Dendritic cell treated with granulocyte-macrophage colony-stimulating factor and Interleukin-4, amounts not matched to agents 40 ng/mL and 50 ng/mL, for 4 days (primary cell): ENCODE measurements at regions of chr15 and their contacts with region 1.

Region 1: DNA sequence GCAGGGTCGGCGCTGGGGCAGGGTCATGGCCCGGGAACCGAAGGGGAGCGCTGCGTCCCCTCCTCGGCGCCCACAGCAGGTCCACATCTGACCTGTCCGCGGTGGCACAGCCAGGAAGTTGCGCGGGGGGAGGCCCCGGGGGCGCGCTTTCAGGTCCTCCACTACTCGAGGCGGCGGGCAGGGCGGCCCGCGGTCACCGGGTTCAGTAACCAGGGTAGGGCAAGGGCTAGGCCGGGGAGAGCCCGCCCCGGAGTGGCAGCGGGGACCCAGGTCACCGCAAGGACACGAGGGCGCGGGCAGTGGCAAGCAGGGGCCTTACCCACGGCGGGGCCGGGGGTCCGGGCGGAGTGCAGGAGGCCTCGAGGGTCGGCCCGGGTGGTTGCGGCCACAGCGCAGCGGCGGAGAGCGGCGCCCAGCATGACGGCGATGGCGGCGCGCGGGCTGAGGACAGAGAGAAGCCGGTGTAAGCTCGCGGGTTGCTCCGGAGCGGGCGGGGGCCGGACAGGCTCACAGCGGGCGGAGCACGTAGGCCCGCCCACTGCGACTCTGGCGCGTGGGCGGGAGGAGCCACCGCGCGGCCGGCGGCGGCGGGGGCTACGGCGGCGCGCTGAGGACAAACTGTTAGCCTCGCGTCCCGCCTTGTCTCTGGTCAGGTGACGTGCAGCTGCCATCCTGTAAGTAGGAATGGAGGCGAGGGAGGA is at the start of gene COX5A:
- H3K4me3 Mint-ChIP-seq: peak within 1 kb of the TSS; percentile 85
- H3K27ac Mint-ChIP-seq: peak within 1 kb of the TSS; percentile 88
- H3K4me1 Mint-ChIP-seq: peaks cover 20% of the 10 kb centered on the region
- H3K27me3 Mint-ChIP-seq: peaks cover 1% of the 10 kb centered on the region

Region 2: GRCh38 chr15:74776821-74777768 is 160.7 kb before region 1 on chr15:
- intact Hi-C with region 1: loop called (anchors 5 kb)
- H3K4me3 Mint-ChIP-seq: peak overlapping the region; percentile 67
- H3K27ac Mint-ChIP-seq: peak overlapping the region; percentile 93
- H3K4me1 Mint-ChIP-seq: peaks cover 79% of the 10 kb centered on the region
- H3K27me3 Mint-ChIP-seq: no peaks in the 10 kb centered on the region

Region 3: GRCh38 chr15:74842581-74843444 is 94.9 kb before region 1 on chr15 and contains the start of gene ULK3:
- intact Hi-C with region 1: loop called (anchors 5 kb)
- H3K4me3 Mint-ChIP-seq: peak within 1 kb of the TSS; percentile 87
- H3K27ac Mint-ChIP-seq: peak within 1 kb of the TSS; percentile 83
- H3K4me1 Mint-ChIP-seq: peaks cover 42% of the 10 kb centered on the region
- H3K27me3 Mint-ChIP-seq: no peaks in the 10 kb centered on the region

Region 4: GRCh38 chr15:74906446-74907162 is 31.1 kb before region 1 on chr15 and contains the start of gene FAM219B:
- intact Hi-C with region 1: loop called (anchors 5 kb)
- H3K4me3 Mint-ChIP-seq: peak within 1 kb of the TSS; percentile 91
- H3K27ac Mint-ChIP-seq: peak within 1 kb of the TSS; percentile 87
- H3K4me1 Mint-ChIP-seq: peaks cover 49% of the 10 kb centered on the region
- H3K27me3 Mint-ChIP-seq: no peaks in the 10 kb centered on the region